ENCODE measurements at regions of chr20 and their contacts with region 1.

Region 1: GRCh38 chr20:34876162-34877001 is at the start of gene ACSS2:
- DNase-seq: peak; percentile 100
- H3K4me3 ChIP-seq: peak within 1 kb of the TSS; percentile 71
- H3K4me3 Mint-ChIP-seq: peak within 1 kb of the TSS; percentile 86
- H3K27ac Mint-ChIP-seq: peak within 1 kb of the TSS; percentile 84
- H3K4me1 ChIP-seq: peaks cover 33% of the 10 kb centered on the region
- H3K4me1 Mint-ChIP-seq: peaks cover 50% of the 10 kb centered on the region
- H3K27me3 ChIP-seq: no peaks in the 10 kb centered on the region
- H3K27me3 Mint-ChIP-seq: no peaks in the 10 kb centered on the region
- CTCF ChIP-seq: peak in 1 of 2 experiments; percentile 0
- total RNA-seq, gene ACSS2: 64.5 and 76.0 TPM in 2 replicates

Region 2: GRCh38 chr20:34861386-34862084 is 14.8 kb before region 1 on chr20:
- CTCF ChIA-PET with region 1: interaction called, 6 read pairs
- POLR2A ChIA-PET with region 1: interaction called, 10 read pairs
- intact Hi-C with region 1: no loop called
- DNase-seq: no peak
- H3K4me3 ChIP-seq: no peak overlapping the region
- H3K4me3 Mint-ChIP-seq: no peak overlapping the region
- H3K27ac Mint-ChIP-seq: no peak overlapping the region
- H3K4me1 ChIP-seq: no peaks in the 10 kb centered on the region
- H3K4me1 Mint-ChIP-seq: no peaks in the 10 kb centered on the region
- H3K27me3 ChIP-seq: no peaks in the 10 kb centered on the region
- H3K27me3 Mint-ChIP-seq: no peaks in the 10 kb centered on the region
- CTCF ChIP-seq: no peak

Region 3: DNA sequence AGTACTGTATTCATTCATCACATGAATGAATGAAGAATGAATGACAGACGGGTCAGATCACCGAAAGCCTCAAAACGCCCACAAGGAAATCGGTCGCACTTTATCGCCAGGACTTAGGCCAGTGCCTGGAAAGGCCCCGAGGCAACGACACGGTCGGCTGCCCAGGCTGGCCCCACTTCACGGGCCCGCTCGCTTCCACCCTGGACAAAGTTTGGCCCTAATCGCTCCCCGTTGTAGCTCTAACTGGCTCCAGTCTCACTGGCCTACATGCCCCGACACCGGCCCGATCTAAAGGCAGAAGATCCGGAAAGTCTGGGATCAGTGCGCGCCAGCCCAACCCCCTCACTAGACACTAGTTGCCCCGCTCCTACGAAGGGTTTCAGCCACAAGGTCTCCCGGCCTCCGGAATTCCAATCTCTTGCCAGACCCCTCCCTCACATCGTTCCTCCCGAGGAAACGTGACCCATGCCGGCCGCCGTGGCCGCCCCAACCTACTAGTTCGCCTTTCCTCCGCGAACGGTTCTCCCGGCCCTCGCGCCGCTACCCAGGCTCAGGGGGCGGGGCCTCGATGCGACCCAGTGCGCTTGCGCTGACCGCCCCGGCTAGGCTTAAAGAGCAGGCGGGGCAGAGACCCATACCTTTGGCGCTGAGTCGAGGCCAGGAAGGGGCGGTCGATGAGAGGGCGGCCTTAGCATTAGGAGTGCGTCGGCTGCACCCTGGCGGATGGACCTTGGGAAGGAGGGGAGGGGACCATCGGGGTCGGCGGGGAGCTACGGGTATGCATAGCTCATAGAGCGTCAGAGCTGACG is 79.1 kb after region 1 on chr20 and contains the starts of genes GSS and MYH7B:
- CTCF ChIA-PET with region 1: interaction called, 331 read pairs
- POLR2A ChIA-PET with region 1: interaction called, 86 read pairs
- intact Hi-C with region 1: loop called (anchors 1 kb)
- DNase-seq: peak; percentile 100
- H3K4me3 ChIP-seq: peak within 1 kb of the TSS; percentile 57
- H3K4me3 Mint-ChIP-seq: peak within 1 kb of the TSS; percentile 90
- H3K27ac Mint-ChIP-seq: peak within 1 kb of the TSS; percentile 96
- H3K4me1 ChIP-seq: peaks cover 5% of the 10 kb centered on the region
- H3K4me1 Mint-ChIP-seq: peaks cover 25% of the 10 kb centered on the region
- H3K27me3 ChIP-seq: no peaks in the 10 kb centered on the region
- H3K27me3 Mint-ChIP-seq: no peaks in the 10 kb centered on the region
- CTCF ChIP-seq: peak; percentile 64 to 83
- total RNA-seq, gene GSS: 138 TPM in 2 replicates
- total RNA-seq, gene MYH7B: 1.9 and 2.5 TPM in 2 replicates

Region 4: GRCh38 chr20:35092524-35093266 is 216.3 kb after region 1 on chr20 and contains the start of gene TRPC4AP:
- CTCF ChIA-PET with region 1: interaction called, 14 read pairs
- POLR2A ChIA-PET with region 1: interaction called, 3 read pairs
- intact Hi-C with region 1: loop called (anchors 1 kb)
- DNase-seq: peak; percentile 94 to 99
- H3K4me3 ChIP-seq: peak within 1 kb of the TSS; percentile 79
- H3K4me3 Mint-ChIP-seq: peak within 1 kb of the TSS; percentile 86
- H3K27ac Mint-ChIP-seq: peak within 1 kb of the TSS; percentile 95
- H3K4me1 ChIP-seq: peaks cover 16% of the 10 kb centered on the region
- H3K4me1 Mint-ChIP-seq: peaks cover 20% of the 10 kb centered on the region
- H3K27me3 ChIP-seq: no peaks in the 10 kb centered on the region
- H3K27me3 Mint-ChIP-seq: no peaks in the 10 kb centered on the region
- CTCF ChIP-seq: peak; percentile 99 to 100
- total RNA-seq, gene TRPC4AP: 144 and 146 TPM in 2 replicates

Region 5: DNA sequence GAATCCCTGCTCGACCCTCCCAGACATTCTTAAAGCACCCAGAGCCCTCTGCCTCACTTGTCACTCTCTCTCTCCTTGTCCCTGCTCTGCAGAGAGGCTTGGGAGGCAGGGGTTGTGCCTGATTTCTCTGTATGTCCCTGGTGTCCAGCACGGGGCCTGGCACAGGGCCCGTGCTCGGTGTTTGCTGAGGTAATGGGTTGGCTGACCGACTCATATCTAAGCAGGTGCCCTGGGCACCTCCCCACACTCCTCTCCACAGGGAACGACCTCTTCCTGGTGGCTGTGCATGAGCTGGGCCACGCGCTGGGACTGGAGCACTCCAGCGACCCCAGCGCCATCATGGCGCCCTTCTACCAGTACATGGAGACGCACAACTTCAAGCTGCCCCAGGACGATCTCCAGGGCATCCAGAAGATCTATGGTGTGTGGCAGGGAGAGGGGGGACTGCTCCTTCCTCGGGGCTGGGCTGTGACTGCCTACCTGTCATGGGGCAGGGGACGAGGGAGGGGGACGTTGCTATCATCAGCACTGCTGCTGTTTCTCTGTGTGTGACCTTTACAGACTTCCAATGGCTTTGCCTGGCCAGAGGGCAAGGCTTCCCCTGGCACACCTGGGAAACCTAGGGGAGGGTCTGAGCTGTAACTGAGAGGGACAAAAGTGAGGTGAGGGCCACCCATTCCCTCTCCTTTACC is 387.3 kb after region 1 on chr20:
- CTCF ChIA-PET with region 1: interaction called, 13 read pairs
- POLR2A ChIA-PET with region 1: interaction called, 13 read pairs
- intact Hi-C with region 1: loop called (anchors 1 kb)
- DNase-seq: peak in 1 of 2 experiments; percentile 57
- H3K4me3 ChIP-seq: peak overlapping the region; percentile 13
- H3K4me3 Mint-ChIP-seq: peak overlapping the region; percentile 63
- H3K27ac Mint-ChIP-seq: peak overlapping the region; percentile 98
- H3K4me1 ChIP-seq: peaks cover 65% of the 10 kb centered on the region
- H3K4me1 Mint-ChIP-seq: peaks cover 48% of the 10 kb centered on the region
- H3K27me3 ChIP-seq: no peaks in the 10 kb centered on the region
- H3K27me3 Mint-ChIP-seq: no peaks in the 10 kb centered on the region
- CTCF ChIP-seq: no peak

Region 6: GRCh38 chr20:35284267-35284991 is 408.0 kb after region 1 on chr20 and contains the start of gene EIF6:
- CTCF ChIA-PET with region 1: no interaction called
- POLR2A ChIA-PET with region 1: interaction called, 10 read pairs
- intact Hi-C with region 1: loop called (anchors 5 kb)
- DNase-seq: peak; percentile 97 to 98
- H3K4me3 ChIP-seq: peak within 1 kb of the TSS; percentile 95
- H3K4me3 Mint-ChIP-seq: peak within 1 kb of the TSS; percentile 84
- H3K27ac Mint-ChIP-seq: peak within 1 kb of the TSS; percentile 87
- H3K4me1 ChIP-seq: peaks cover 28% of the 10 kb centered on the region
- H3K4me1 Mint-ChIP-seq: peaks cover 18% of the 10 kb centered on the region
- H3K27me3 ChIP-seq: no peaks in the 10 kb centered on the region
- H3K27me3 Mint-ChIP-seq: no peaks in the 10 kb centered on the region
- CTCF ChIP-seq: no peak
- total RNA-seq, gene EIF6: 403 and 420 TPM in 2 replicates